ENCODE measurements at regions of chr7 and their contacts with region 1.

Region 1: GRCh38 chr7:125878235-125878928 is 948.8 kb upstream of the POT1 start:
- DNase-seq: no peak
- ATAC-seq: no peak
- H3K4me3 ChIP-seq: no peak overlapping the region
- H3K27ac ChIP-seq: no peak overlapping the region
- H3K4me1 ChIP-seq: no peaks in the 10 kb centered on the region
- H3K27me3 ChIP-seq: no peaks in the 10 kb centered on the region
- CTCF ChIP-seq: no peak

Region 2: DNA sequence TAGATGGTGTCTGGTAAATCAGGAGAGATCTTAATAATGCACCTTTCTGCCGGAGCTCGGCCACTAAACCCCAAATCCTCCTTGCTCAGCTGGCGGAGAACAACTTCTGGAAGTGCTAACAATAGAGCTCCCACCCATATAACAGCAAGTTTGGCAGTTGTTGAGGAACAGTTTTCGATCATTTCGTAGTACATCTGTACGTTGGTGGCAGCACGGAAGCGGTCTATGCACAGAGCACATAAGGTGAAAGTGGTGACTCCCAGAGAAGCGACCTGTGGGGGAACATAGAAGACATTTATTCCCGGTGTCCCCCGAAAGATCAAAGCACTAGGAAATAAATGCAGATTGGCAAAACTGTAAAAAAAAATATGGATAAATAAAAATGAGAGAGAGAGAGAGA is 1131.3 kb before region 1 on chr7:
- CTCF ChIA-PET with region 1: no interaction called
- POLR2A ChIA-PET with region 1: no interaction called
- in situ Hi-C with region 1: no loop called
- intact Hi-C with region 1: loop called (anchors 10 kb)
- DNase-seq: no peak
- ATAC-seq: no peak
- H3K4me3 ChIP-seq: no peak overlapping the region
- H3K27ac ChIP-seq: no peak overlapping the region
- H3K4me1 ChIP-seq: no peaks in the 10 kb centered on the region
- H3K27me3 ChIP-seq: no peaks in the 10 kb centered on the region
- CTCF ChIP-seq: no peak

Region 3: GRCh38 chr7:125445836-125446235 is 432.5 kb before region 1 on chr7:
- CTCF ChIA-PET with region 1: no interaction called
- POLR2A ChIA-PET with region 1: no interaction called
- in situ Hi-C with region 1: no loop called
- intact Hi-C with region 1: no loop called
- DNase-seq: no peak
- ATAC-seq: no peak
- H3K4me3 ChIP-seq: no peak overlapping the region
- H3K27ac ChIP-seq: no peak overlapping the region
- H3K4me1 ChIP-seq: no peaks in the 10 kb centered on the region
- H3K27me3 ChIP-seq: no peaks in the 10 kb centered on the region
- CTCF ChIP-seq: no peak